Aorta (tissue), 5 donors: ENCODE measurements at regions of chr10 and their contacts with region 1.

Region 1: DNA sequence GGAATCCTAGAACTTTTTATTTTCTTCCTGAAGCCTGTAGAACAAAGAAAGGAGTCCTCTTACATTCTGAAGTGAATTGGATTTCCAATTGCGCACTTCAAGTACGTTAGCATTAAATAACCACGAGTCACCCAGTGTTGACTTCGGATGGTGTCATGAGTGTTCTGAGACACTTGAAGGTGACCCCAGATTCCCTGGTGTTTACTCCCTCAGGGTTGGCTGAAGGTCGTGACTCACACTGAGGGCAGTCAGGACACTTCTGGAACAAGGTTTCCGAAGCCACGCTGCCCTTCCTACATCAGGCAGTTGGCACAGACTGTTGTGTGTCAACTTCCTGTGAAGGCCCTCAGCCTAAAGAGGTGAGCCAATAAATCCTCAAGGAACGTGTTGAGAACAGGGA is 186.6 kb upstream of the CELF2 start:
- DNase-seq: peak; percentile 82 to 84
- ATAC-seq: peak; percentile 79
- H3K4me3 ChIP-seq: no peak overlapping the region
- H3K27ac ChIP-seq: peak overlapping the region; percentile 72 to 92
- H3K4me1 ChIP-seq: peaks cover 0 to 3% of the 10 kb centered on the region in 2 donors
- H3K27me3 ChIP-seq: no peaks in the 10 kb centered on the region

Region 2: GRCh38 chr10:10642751-10643150 is 188.3 kb before region 1 on chr10:
- intact Hi-C with region 1: no loop called
- DNase-seq: peak; percentile 73 to 77
- ATAC-seq: peak; percentile 82
- H3K4me3 ChIP-seq: no peak overlapping the region
- H3K27ac ChIP-seq: peak overlapping the region in 1 of 2 donors; percentile 2
- H3K4me1 ChIP-seq: peaks cover 2 to 11% of the 10 kb centered on the region in 2 donors
- H3K27me3 ChIP-seq: no peaks in the 10 kb centered on the region

Region 3: DNA sequence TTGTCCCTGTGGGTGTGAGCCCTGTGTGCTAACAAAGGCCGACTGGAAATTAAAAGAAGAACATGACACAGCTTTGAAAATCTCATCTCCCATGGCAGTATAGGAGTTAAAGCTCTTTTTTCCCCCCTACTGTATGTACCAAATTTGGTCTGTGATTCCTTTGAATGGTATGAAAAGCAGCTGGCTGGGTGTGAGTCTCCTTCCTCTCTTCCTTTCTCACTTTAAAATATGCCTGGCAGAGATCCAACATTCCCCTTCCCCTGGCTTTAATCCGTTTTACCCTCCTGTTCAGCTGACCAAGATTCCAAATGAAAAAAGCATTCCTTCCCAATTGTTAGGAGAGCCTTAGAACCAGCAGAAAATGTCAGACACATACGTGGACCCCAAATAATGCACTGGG is 38.4 kb before region 1 on chr10:
- intact Hi-C with region 1: loop called (anchors 5 kb)
- DNase-seq: no peak
- ATAC-seq: no peak
- H3K4me3 ChIP-seq: no peak overlapping the region
- H3K27ac ChIP-seq: no peak overlapping the region
- H3K4me1 ChIP-seq: peaks cover 0 to 4% of the 10 kb centered on the region in 2 donors
- H3K27me3 ChIP-seq: no peaks in the 10 kb centered on the region

Region 4: GRCh38 chr10:10798102-10798863 is 32.8 kb before region 1 on chr10:
- intact Hi-C with region 1: loop called (anchors 5 kb)
- DNase-seq: peak in 1 of 2 donors; percentile 77
- ATAC-seq: peak; percentile 68
- H3K4me3 ChIP-seq: peak overlapping the region; percentile 22 to 55
- H3K27ac ChIP-seq: peak overlapping the region; percentile 92 to 94
- H3K4me1 ChIP-seq: peaks cover 2 to 9% of the 10 kb centered on the region in 2 donors
- H3K27me3 ChIP-seq: no peaks in the 10 kb centered on the region

Region 5: GRCh38 chr10:10886861-10887531 is 55.9 kb after region 1 on chr10:
- intact Hi-C with region 1: no loop called
- DNase-seq: no peak
- ATAC-seq: peak; percentile 33
- H3K4me3 ChIP-seq: no peak overlapping the region
- H3K27ac ChIP-seq: peak overlapping the region in 1 of 2 donors; percentile 44
- H3K4me1 ChIP-seq: peaks cover 8 to 10% of the 10 kb centered on the region in 2 donors
- H3K27me3 ChIP-seq: no peaks in the 10 kb centered on the region